Body of pancreas (tissue), 4 donors: ENCODE measurements at regions of chr19 and their contacts with region 1.

Region 1: GRCh38 chr19:11035441-11036377 is 53.6 kb upstream of the LDLR start:
- DNase-seq: peak; percentile 94 to 96 (median 95)
- ATAC-seq: peak; percentile 94
- H3K4me3 ChIP-seq: no peak overlapping the region
- H3K27ac ChIP-seq: peak overlapping the region in 3 of 4 donors; percentile 12 to 21 (median 17)
- H3K4me1 ChIP-seq: no peaks in the 10 kb centered on the region
- H3K27me3 ChIP-seq: no peaks in the 10 kb centered on the region
- CTCF ChIP-seq: peak; percentile 88 to 95 (median 92)
- POLR2A ChIP-seq: no peak

Region 2: DNA sequence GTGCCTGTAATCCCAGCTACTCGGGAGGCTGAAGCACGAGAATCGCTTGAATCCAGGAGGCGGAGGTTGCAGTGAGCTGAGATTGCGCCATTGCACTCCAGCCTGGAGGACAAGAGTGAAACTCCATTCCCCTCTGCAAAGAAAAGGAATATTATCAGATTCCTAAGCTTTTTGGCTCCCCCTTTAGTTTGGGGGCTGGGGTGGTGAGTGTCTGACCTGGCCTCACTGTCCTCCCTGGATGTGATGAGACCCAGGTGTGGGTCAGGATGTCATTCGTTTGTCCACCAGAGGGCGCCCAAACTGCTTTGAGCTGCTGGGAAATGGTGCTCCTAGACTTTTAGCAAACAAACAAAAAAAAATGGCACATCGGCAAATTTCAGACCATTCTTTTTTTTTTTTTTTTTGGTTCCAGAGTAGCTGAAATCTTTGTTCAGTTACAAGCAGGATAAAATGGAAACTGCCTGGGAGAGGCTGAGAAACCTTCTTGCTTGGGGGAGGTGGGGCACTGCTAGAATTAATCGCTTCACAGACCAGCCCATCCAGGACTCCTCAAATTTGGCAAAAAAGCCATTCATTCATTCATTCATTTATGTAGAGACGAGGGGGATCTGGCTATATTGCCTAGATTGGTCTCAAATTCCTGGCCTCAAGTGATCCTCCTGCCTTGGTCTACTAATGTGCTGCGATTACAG is 90.4 kb after region 1 on chr19:
- intact Hi-C with region 1: loop called (anchors 5 kb)
- DNase-seq: peak; percentile 80 to 88 (median 81)
- ATAC-seq: peak; percentile 51
- H3K4me3 ChIP-seq: no peak overlapping the region
- H3K27ac ChIP-seq: no peak overlapping the region
- H3K4me1 ChIP-seq: peaks cover 10% of the 10 kb centered on the region
- H3K27me3 ChIP-seq: no peaks in the 10 kb centered on the region
- CTCF ChIP-seq: peak; percentile 26 to 77 (median 69)
- POLR2A ChIP-seq: no peak

Region 3: DNA sequence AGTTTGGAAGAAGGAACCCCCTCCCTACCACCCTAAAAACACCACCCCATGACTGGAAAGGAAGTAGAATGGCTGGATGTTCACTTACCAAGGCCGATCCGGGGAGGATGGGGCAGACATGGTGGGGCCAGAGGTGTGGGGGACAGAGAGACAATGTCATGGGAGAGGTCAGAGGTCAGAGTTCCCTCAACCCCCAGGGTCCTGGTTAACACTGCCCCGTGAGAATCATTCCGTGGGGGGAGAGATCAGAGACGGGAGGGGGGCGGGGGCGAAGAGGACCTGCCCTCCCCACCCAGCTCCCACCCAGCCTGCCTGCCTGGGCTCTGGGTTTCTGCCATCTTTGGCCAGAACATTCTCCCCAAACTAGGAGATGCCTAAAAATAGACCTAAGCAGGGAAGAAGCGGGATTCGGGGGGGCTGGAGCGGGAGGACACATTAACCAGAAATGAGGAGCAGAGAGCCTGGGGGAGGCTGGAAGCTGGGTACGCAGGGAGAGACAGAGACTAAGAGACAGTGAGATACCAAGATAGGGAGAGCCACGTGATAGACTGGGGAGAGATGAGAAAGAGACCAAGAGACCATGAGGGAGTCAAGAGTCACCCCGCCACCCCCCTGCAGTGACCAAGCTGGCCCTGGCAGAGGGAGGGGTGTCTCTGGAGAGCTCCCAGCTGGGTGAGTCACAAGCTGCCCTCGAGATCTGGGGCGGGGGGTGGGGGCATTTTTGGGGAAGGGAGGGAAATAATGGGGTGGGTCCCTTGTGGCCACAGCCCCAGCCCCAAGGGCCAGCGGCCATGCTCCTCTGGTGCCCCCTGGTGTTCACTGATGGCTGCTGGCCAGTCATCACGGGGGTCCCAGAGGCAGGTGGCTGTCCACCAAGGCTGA is 167.7 kb after region 1 on chr19:
- intact Hi-C with region 1: loop called (anchors 10 kb)
- DNase-seq: peak; percentile 60 to 66 (median 62)
- ATAC-seq: peak; percentile 65
- H3K4me3 ChIP-seq: no peak overlapping the region
- H3K27ac ChIP-seq: peak overlapping the region in 3 of 4 donors; percentile 34 to 61 (median 43)
- H3K4me1 ChIP-seq: peaks cover 38% of the 10 kb centered on the region
- H3K27me3 ChIP-seq: no peaks in the 10 kb centered on the region
- CTCF ChIP-seq: peak; percentile 62 to 85 (median 76)
- POLR2A ChIP-seq: no peak